ENCODE measurements at regions of chr2 and their contacts with region 1.

Region 1: DNA sequence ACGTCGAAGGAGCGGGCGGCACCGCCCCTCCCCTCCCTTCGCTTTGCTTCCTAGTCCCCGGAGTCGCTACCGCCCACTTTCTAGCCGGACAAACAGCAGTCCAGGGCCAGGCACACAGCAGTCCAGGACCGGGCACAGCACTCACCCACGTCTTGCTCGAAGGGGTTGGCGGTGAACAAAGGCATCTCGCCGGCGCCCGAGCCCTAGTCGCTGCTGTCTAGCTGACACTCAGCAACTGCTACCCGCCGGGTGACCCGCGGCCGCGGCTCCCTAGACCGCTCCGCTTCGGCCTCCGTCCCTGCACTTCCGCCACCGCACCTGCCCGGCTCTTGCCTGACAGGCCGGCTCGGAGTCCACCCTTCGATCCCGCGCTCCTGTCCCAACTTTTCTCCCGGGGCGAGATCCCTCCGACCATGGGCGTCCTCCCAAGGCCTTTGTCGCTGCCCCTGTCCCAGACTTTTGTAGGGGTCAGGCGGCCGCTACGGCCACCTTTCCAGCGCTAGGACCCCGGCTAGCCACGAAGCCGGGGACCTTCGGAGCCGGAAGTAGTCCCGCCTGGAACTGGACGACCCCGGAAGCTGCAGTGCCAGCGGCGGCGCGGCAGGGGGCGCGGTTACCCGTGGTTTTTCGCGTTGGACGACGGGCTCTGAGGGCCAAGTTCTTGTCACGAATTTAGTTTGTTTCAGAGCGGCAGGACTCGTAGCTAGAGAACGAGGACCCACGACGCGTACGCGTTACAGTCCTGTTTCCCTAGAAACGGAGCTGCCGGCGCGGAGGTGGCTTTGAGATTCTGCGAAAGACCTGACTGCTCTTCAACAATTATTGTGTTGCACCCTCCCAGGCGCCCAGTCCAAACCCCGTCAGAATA is at the start of gene STAM2:
- DNase-seq: peak; percentile 96
- H3K4me3 ChIP-seq: peak within 1 kb of the TSS; percentile 43
- H3K27ac ChIP-seq: peak within 1 kb of the TSS; percentile 92
- H3K4me1 ChIP-seq: no peaks in the 10 kb centered on the region
- H3K27me3 ChIP-seq: no peaks in the 10 kb centered on the region
- CTCF ChIP-seq: peak; percentile 97
- total RNA-seq, gene STAM2: 30.6 to 42.0 TPM

Region 2: GRCh38 chr2:152036611-152037469 is 138.9 kb before region 1 on chr2:
- intact Hi-C with region 1: loop called (anchors 5 kb)
- DNase-seq: peak; percentile 73
- H3K4me3 ChIP-seq: no peak overlapping the region
- H3K27ac ChIP-seq: no peak overlapping the region
- H3K4me1 ChIP-seq: no peaks in the 10 kb centered on the region
- H3K27me3 ChIP-seq: no peaks in the 10 kb centered on the region
- CTCF ChIP-seq: peak; percentile 68

Region 3: GRCh38 chr2:152534460-152535135 is 358.9 kb after region 1 on chr2:
- intact Hi-C with region 1: no loop called
- DNase-seq: no peak
- H3K4me3 ChIP-seq: no peak overlapping the region
- H3K27ac ChIP-seq: no peak overlapping the region
- H3K4me1 ChIP-seq: no peaks in the 10 kb centered on the region
- H3K27me3 ChIP-seq: no peaks in the 10 kb centered on the region
- CTCF ChIP-seq: no peak

Region 4: GRCh38 chr2:152717228-152718075 is 541.8 kb after region 1 on chr2 and contains the start of gene PRPF40A:
- intact Hi-C with region 1: loop called (anchors 10 kb)
- DNase-seq: peak; percentile 99
- H3K4me3 ChIP-seq: peak within 1 kb of the TSS; percentile 93
- H3K27ac ChIP-seq: peak within 1 kb of the TSS; percentile 95
- H3K4me1 ChIP-seq: peaks cover 5% of the 10 kb centered on the region
- H3K27me3 ChIP-seq: no peaks in the 10 kb centered on the region
- CTCF ChIP-seq: no peak
- total RNA-seq, gene PRPF40A: 103 to 115 TPM